Panc1 (cell line): ENCODE measurements at regions of chr11 and their contacts with region 1.

Region 1: DNA sequence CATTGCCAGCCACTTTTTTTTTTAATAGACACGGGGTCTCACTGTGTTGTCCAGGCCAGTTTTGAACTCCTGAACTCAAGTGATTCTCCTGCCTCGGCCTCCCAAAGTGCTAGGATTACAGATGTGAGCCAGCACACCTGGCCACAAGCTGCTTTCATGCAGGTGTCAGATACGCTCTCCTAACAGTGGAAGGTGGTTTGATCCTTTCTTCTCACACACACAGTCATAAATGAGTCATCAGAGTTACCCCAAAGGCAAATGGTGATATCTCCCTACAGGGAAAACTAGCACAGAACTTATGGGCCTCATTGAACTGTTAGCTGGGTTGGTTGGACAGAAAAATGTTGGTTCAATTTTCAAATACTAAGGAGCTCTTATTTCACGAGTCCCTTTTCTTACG is 38.2 kb upstream of the UBASH3B start:
- DNase-seq: no peak
- ATAC-seq: 0 out of 2 replicates have a peak, but pooled peaks have one; percentile 27
- H3K4me3 ChIP-seq: no peak overlapping the region
- H3K27ac ChIP-seq: no peak overlapping the region
- H3K4me1 ChIP-seq: no peaks in the 10 kb centered on the region
- H3K27me3 ChIP-seq: no peaks in the 10 kb centered on the region
- CTCF ChIP-seq: no peak

Region 2: DNA sequence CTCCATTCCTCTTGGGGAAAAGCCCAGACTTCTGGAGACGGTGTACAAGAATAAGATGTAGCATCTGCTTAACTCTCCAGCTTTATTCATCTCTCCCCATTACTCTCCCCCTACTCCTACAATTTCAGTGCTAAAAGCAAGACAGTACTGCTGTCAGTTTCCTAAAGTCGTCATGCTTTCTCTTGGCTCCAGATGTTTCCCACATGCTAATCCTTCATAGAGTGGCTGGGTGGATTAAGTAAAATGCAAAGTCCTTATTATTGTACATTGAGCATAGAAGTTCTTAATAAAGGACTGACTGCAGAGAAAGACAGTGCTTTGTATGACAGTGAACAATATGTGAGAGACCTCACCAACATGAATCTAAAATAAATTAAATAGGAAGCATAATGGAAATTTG is 104.0 kb before region 1 on chr11:
- CTCF ChIA-PET with region 1: interaction called, 14 read pairs
- POLR2A ChIA-PET with region 1: no interaction called
- in situ Hi-C with region 1: no loop called
- intact Hi-C with region 1: no loop called
- DNase-seq: no peak
- ATAC-seq: no peak
- H3K4me3 ChIP-seq: no peak overlapping the region
- H3K27ac ChIP-seq: no peak overlapping the region
- H3K4me1 ChIP-seq: no peaks in the 10 kb centered on the region
- H3K27me3 ChIP-seq: peaks cover 25% of the 10 kb centered on the region
- CTCF ChIP-seq: no peak

Region 3: DNA sequence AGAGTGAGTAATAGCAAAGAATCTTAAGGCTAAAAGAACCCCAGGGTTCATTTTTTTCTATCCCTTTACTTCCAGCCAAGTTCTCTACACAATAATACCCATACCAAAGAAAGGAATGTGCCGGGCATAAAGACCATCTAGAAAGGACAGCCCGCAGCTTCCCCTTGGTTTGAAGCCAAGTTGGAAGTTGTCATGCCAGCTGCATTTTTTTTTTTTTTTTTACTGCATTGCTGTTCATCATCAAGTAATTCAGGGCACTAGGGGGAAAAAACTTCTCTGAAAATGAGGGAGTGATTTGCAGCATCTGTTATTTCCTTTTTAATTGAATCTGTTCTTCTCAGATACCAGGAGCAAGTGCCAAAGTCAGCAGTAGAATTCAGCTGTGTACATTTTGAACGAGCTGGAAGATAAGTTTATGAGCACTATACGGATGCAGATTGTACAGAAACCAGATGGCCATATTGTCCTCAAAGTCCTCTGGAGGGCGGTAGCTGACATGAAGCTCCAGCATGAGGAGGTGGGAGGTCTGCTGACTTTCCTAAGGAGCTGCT is 94.6 kb after region 1 on chr11:
- CTCF ChIA-PET with region 1: no interaction called
- POLR2A ChIA-PET with region 1: no interaction called
- in situ Hi-C with region 1: no loop called
- intact Hi-C with region 1: no loop called
- DNase-seq: no peak
- ATAC-seq: 0 out of 2 replicates have a peak, but pooled peaks have one; percentile 29
- H3K4me3 ChIP-seq: no peak overlapping the region
- H3K27ac ChIP-seq: no peak overlapping the region
- H3K4me1 ChIP-seq: no peaks in the 10 kb centered on the region
- H3K27me3 ChIP-seq: no peaks in the 10 kb centered on the region
- CTCF ChIP-seq: no peak; the same call in 1 of the 2 replicates